Heart right ventricle (tissue), 16 donors: ENCODE measurements at regions of chr4 and their contacts with region 1.

Region 1: DNA sequence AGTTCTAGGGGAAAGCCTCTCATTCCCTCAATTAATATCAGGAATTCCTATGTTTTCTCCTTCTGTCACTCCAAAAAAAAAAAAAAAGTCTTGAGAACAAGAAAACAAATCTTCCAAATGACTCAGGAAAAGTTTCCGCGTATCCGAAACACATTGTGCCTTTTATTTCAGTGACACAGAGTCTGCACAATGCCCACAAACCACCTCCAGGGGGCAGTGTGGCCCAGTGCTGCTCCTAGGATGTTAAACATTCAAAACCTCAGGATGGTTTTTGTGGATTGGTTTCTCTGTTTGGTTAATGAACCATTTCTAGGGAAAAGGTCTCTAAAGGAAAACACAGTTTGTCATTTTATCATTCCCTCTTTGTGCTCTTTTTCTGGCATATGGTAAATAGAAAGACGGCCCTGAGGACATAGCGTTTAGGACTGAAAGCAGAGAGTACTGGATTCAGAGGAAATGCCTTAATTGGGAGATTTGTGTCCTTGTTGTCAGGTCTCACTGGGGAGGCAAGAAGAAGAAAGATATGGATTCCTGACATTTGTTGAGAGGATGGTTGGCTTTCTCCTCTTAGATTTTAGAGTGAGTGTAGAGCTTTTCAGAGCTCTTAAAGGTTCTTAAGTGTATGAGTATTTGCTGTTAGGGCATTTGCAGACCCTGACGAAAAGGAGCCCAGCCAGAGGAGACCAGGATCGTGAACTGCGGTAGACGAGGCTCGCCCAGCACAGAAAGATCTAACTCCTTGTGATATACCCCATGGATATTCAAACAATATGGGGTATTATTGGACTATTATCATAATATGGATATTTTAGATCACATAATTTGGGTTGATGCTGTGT is 65.7 kb upstream of the MAP9 start:
- DNase-seq: peak; percentile 87
- ATAC-seq: peak; percentile 77 to 95 (median 94)
- H3K4me3 ChIP-seq: peak overlapping the region in 8 of 10 donors; percentile 6 to 44 (median 30)
- H3K27ac ChIP-seq: peak overlapping the region in 6 of 10 donors; percentile 24 to 65 (median 54)
- H3K4me1 ChIP-seq: peaks cover 0 to 13% (median 0%) of the 10 kb centered on the region in 9 donors
- H3K27me3 ChIP-seq: no peaks in the 10 kb centered on the region
- CTCF ChIP-seq: peak; percentile 90 to 99 (median 96)

Region 2: DNA sequence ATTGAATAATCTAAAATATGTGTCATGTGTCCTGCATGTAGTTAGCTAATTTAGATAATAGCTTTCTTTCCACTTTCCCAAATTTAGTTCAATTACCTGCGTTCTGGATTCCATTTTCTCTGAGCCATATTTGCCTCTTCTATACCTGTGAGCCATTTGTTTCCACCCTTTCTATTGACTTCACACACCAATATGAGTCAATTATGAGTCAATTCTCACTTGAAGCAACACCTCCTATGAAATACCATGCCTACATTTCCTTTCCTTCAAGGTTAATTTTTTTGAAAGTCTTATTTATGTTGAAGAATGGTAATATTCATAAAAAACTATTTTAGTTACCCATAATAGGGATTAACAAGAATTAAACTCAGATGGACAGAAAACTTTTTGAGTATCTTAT is 208.3 kb before region 1 on chr4:
- intact Hi-C with region 1: no loop called
- DNase-seq: no peak
- ATAC-seq: no peak
- H3K4me3 ChIP-seq: no peak overlapping the region
- H3K27ac ChIP-seq: no peak overlapping the region
- H3K4me1 ChIP-seq: no peaks in the 10 kb centered on the region
- H3K27me3 ChIP-seq: no peaks in the 10 kb centered on the region
- CTCF ChIP-seq: no peak

Region 3: DNA sequence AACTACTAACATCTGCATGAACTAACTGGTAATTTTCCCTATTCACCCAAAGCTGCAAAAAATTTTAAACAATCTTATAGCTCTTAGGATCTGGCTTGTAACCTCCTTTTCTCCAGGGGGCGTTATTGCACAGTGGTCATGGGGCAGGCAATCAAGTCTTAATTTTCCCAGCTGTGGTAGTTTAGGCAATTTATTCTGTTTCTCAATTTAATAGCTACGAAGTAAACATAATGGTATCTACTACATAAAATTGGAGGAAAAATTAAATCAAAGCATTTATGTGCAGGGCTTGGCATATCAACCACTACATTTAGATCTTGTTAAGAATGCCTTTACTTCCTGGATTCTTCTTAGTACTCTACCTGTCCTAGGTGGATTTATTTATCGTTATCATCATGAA is 86.8 kb after region 1 on chr4:
- intact Hi-C with region 1: loop called in 1 of 10 experiments (anchors 5 kb)
- DNase-seq: no peak
- ATAC-seq: no peak
- H3K4me3 ChIP-seq: no peak overlapping the region
- H3K27ac ChIP-seq: no peak overlapping the region
- H3K4me1 ChIP-seq: peaks cover 6 to 43% (median 24%) of the 10 kb centered on the region in 9 donors
- H3K27me3 ChIP-seq: no peaks in the 10 kb centered on the region
- CTCF ChIP-seq: peak in 6 of 9 donors; percentile 9 to 42 (median 16)

Region 4: GRCh38 chr4:155639704-155640523 is 197.4 kb after region 1 on chr4:
- intact Hi-C with region 1: loop called in 1 of 10 experiments (anchors 10 kb)
- DNase-seq: no peak
- ATAC-seq: peak in 2 of 8 donors; percentile 37 to 70
- H3K4me3 ChIP-seq: no peak overlapping the region
- H3K27ac ChIP-seq: peak overlapping the region in 1 of 10 donors; percentile 37
- H3K4me1 ChIP-seq: peaks cover 0 to 30% (median 0%) of the 10 kb centered on the region in 9 donors
- H3K27me3 ChIP-seq: no peaks in the 10 kb centered on the region
- CTCF ChIP-seq: no peak

Region 5: GRCh38 chr4:155787113-155787710 is 344.7 kb after region 1 on chr4:
- intact Hi-C with region 1: loop called (anchors 1 to 10 kb)
- DNase-seq: no peak
- ATAC-seq: peak; percentile 73 to 91 (median 87)
- H3K4me3 ChIP-seq: no peak overlapping the region
- H3K27ac ChIP-seq: no peak overlapping the region
- H3K4me1 ChIP-seq: peaks cover 0 to 57% (median 7%) of the 10 kb centered on the region in 9 donors
- H3K27me3 ChIP-seq: no peaks in the 10 kb centered on the region
- CTCF ChIP-seq: peak; percentile 51 to 90 (median 73)